WTC11 (cell line): ENCODE measurements at regions of chr16 and their contacts with region 1.

Region 1: DNA sequence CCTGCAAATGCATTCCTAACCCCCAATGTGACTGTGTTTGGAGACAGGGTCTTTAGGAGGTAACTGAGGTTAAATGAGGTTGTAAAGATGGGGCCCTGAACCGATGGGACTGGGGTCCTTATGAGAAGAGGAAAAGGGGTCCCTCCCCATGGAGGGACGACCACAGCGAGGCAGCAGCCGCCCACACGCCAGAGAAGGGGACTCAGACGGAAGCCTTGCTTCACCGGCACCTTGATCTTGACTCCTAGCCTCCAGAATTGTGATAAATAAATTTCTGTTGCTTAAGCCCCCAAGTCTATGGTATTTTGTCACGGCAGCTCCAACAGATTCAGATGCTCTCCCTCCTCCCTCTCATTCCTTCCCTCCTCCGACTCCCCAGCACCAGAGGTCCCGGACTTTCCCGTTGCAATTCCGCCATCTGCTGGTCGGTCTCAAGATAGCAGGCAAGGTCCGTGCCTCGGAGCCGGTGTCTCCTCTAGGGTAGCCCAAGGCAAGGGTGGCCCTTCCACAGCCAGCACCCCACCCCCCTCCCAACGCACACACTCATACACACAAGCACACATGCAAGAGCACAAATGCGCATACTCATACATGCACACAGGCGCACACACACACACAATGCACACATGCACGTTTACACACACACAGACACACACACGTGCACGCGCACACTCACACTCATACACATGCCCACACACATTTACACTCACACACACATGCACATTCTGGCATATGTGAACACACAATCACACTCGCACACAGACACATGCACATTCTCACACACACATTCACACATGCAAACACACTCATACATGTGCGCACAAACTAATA is 23.1 kb upstream of the C16orf78 start:
- DNase-seq: peak; percentile 86
- ATAC-seq: peak; percentile 52
- H3K4me3 Mint-ChIP-seq: no peak overlapping the region
- H3K27ac Mint-ChIP-seq: no peak overlapping the region
- H3K4me1 Mint-ChIP-seq: peaks cover 24% of the 10 kb centered on the region
- H3K27me3 Mint-ChIP-seq: peaks cover 2% of the 10 kb centered on the region; the same call in 1 of the 2 replicates
- CTCF ChIP-seq: peak; percentile 75

Region 2: DNA sequence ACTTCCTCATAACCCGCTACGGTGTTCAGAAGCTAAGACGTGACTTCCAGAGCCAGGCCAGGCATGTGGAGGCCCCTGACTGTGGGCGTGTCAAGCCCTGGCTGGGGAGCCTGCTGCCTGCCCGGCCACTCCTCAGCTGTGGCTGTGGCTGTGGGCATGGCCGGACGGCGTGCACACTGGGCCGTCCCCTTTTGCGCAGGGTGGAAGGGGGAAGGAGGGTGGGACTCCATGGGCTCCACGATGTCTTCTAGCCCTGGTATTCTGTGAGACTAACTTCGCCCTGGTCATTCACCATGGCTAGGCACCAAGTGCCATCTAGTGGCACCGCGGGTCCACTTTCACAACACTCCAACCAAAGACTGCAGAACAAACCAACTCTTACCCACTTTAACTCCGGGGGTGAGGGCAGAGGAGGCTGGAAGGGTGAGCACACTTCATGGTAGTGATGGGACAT is 808.4 kb before region 1 on chr16:
- CTCF ChIA-PET with region 1: no interaction called
- POLR2A ChIA-PET with region 1: no interaction called
- DNase-seq: no peak
- ATAC-seq: peak; percentile 54
- H3K4me3 Mint-ChIP-seq: no peak overlapping the region
- H3K27ac Mint-ChIP-seq: no peak overlapping the region
- H3K4me1 Mint-ChIP-seq: peaks cover 7% of the 10 kb centered on the region; the same call in 1 of the 2 replicates
- H3K27me3 Mint-ChIP-seq: no peaks in the 10 kb centered on the region
- CTCF ChIP-seq: no peak

Region 3: DNA sequence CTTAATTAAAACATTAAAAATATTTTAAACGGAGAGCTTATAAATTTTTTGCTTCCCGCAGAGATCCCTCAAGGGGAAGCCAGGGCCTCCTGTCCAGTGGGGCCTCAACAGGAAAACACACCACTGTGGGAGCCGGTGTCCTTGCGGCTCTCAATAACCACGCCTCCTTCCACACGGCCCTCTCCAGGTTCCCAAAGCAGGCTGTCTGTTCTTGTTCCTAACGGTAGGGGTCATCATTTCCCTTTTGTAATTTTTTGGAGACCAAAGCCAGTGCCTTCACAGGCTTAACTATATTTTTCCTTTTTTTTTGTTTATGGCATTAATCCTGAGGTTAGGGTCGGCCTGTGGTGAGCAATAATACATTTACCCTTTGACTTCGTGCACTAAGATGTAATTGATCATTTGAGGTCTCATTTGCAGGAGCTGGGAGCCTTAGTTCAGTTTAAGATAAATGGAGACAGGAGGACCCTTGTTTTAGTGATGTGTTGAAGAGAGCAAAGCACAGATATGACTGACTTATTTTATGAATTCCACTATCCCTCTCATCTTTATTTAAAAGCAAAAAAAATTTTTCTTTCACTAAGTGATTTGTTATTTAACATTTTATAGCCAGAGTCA is 663.0 kb before region 1 on chr16:
- CTCF ChIA-PET with region 1: interaction called, 10 read pairs
- POLR2A ChIA-PET with region 1: no interaction called
- DNase-seq: peak; percentile 60
- ATAC-seq: peak; percentile 91
- H3K4me3 Mint-ChIP-seq: no peak overlapping the region
- H3K27ac Mint-ChIP-seq: no peak overlapping the region
- H3K4me1 Mint-ChIP-seq: peaks cover 2% of the 10 kb centered on the region; the same call in 1 of the 2 replicates
- H3K27me3 Mint-ChIP-seq: no peaks in the 10 kb centered on the region
- CTCF ChIP-seq: peak; percentile 35; the same call in 1 of the 2 replicates

Region 4: GRCh38 chr16:49148410-49148809 is 202.1 kb before region 1 on chr16:
- CTCF ChIA-PET with region 1: no interaction called
- POLR2A ChIA-PET with region 1: no interaction called
- DNase-seq: no peak
- ATAC-seq: no peak
- H3K4me3 Mint-ChIP-seq: no peak overlapping the region
- H3K27ac Mint-ChIP-seq: no peak overlapping the region
- H3K4me1 Mint-ChIP-seq: no peaks in the 10 kb centered on the region
- H3K27me3 Mint-ChIP-seq: no peaks in the 10 kb centered on the region
- CTCF ChIP-seq: no peak

Region 5: DNA sequence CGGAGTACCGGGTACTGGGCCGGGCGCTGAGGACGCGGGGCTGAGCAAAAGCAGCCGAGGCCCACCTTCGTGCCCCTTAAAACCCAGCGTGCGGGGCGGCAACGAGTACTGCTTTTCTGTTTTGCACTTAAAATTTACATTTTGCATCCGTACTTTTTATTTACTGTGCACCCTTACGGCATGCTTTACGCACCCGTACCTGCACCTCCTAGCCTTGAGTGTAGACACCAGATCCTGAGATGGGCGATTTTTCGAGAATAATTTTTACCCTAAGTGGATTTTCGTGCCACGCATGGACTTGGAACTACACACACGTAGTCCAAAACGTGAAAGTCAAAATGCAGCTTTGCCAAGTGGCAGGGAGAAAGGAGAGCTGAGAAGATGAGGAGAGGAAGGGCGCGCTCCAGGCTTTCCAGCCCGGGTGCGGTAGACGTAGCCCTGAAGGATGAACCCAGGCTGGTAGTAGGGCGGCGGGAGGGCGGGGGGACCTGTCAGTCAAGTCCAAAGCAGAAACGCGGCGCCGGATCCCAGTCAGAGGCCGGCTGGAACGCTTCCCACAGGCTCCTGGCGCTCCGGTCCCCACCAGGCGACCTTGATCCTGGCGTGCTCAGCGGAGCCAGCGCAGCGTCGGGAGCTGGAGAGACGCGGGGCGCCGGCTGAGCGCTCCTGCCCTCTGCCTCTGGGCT is 67.6 kb before region 1 on chr16:
- CTCF ChIA-PET with region 1: interaction called, 22 read pairs
- POLR2A ChIA-PET with region 1: no interaction called
- DNase-seq: peak; percentile 75
- ATAC-seq: peak; percentile 6; the same call in 1 of the 2 replicates
- H3K4me3 Mint-ChIP-seq: peak overlapping the region; percentile 88
- H3K27ac Mint-ChIP-seq: no peak overlapping the region; the same call in 1 of the 2 replicates
- H3K4me1 Mint-ChIP-seq: peaks cover 45% of the 10 kb centered on the region
- H3K27me3 Mint-ChIP-seq: peaks cover 77% of the 10 kb centered on the region
- CTCF ChIP-seq: no peak

Region 6: GRCh38 chr16:49332589-49333257 is 17.8 kb before region 1 on chr16:
- CTCF ChIA-PET with region 1: interaction called, 39 read pairs
- POLR2A ChIA-PET with region 1: no interaction called
- DNase-seq: no peak
- ATAC-seq: no peak; the same call in 1 of the 2 replicates
- H3K4me3 Mint-ChIP-seq: no peak overlapping the region
- H3K27ac Mint-ChIP-seq: no peak overlapping the region
- H3K4me1 Mint-ChIP-seq: peaks cover 3% of the 10 kb centered on the region
- H3K27me3 Mint-ChIP-seq: no peaks in the 10 kb centered on the region; the same call in none of the 2 replicates
- CTCF ChIP-seq: no peak

Region 7: GRCh38 chr16:49407873-49408550 is 57.5 kb after region 1 on chr16:
- CTCF ChIA-PET with region 1: interaction called, 10 read pairs
- POLR2A ChIA-PET with region 1: no interaction called
- DNase-seq: peak; percentile 93
- ATAC-seq: peak; percentile 100
- H3K4me3 Mint-ChIP-seq: no peak overlapping the region
- H3K27ac Mint-ChIP-seq: no peak overlapping the region
- H3K4me1 Mint-ChIP-seq: peaks cover 3% of the 10 kb centered on the region
- H3K27me3 Mint-ChIP-seq: peaks cover 2% of the 10 kb centered on the region; the same call in 1 of the 2 replicates
- CTCF ChIP-seq: peak; percentile 81

Region 8: GRCh38 chr16:49419006-49419405 is 68.5 kb after region 1 on chr16:
- CTCF ChIA-PET with region 1: no interaction called
- POLR2A ChIA-PET with region 1: no interaction called
- DNase-seq: no peak
- ATAC-seq: no peak
- H3K4me3 Mint-ChIP-seq: no peak overlapping the region
- H3K27ac Mint-ChIP-seq: no peak overlapping the region
- H3K4me1 Mint-ChIP-seq: no peaks in the 10 kb centered on the region
- H3K27me3 Mint-ChIP-seq: no peaks in the 10 kb centered on the region; the same call in 1 of the 2 replicates
- CTCF ChIP-seq: no peak

Region 9: DNA sequence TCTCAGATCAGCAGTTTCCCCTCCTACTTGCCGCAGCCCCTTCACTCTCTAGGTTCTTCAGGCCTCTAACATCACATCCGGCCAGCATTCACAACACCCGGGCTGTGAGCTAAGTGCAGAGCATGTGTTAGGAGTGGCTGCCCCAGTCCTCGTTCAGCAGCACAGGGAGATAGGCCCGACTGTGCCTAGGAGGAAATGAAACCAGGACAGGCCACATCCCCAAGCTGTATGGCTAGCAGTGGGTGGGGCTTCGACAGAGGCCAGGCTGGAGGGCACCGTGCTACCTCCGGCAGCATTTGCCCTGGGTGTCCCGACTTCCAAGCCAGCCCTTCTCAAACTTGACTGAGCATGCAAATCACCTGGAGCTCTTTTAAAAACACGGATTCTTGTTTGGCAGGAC is 224.9 kb after region 1 on chr16:
- CTCF ChIA-PET with region 1: no interaction called
- POLR2A ChIA-PET with region 1: no interaction called
- DNase-seq: peak; percentile 35
- ATAC-seq: peak; percentile 94
- H3K4me3 Mint-ChIP-seq: no peak overlapping the region
- H3K27ac Mint-ChIP-seq: peak overlapping the region; percentile 34
- H3K4me1 Mint-ChIP-seq: peaks cover 24% of the 10 kb centered on the region
- H3K27me3 Mint-ChIP-seq: no peaks in the 10 kb centered on the region
- CTCF ChIP-seq: no peak